Heart right ventricle (tissue), 16 donors: ENCODE measurements at regions of chr12 and their contacts with region 1.

Region 1: DNA sequence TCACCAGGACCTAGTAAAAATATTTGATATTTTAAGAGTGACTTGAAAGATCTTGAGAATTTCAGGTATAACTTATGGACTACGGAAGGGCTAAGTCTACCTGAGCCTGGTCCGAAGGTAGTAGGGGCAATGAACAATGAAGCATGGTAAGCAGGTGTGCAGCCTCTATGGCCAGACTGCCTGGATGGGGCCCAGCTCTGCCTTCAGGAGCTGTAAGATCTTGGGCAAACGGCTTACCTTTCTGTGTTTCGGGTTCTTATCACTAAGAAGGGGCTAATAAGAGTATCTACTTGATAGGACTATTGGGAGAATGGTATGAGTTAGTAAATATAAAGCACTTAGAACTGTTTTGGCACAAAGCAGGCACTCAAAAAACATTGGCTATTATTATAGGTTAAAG is 19.1 kb upstream of the WASHC3 start:
- DNase-seq: no peak
- ATAC-seq: no peak
- H3K4me3 ChIP-seq: no peak overlapping the region
- H3K27ac ChIP-seq: no peak overlapping the region
- H3K4me1 ChIP-seq: no peaks in the 10 kb centered on the region
- H3K27me3 ChIP-seq: no peaks in the 10 kb centered on the region
- CTCF ChIP-seq: no peak

Region 2: DNA sequence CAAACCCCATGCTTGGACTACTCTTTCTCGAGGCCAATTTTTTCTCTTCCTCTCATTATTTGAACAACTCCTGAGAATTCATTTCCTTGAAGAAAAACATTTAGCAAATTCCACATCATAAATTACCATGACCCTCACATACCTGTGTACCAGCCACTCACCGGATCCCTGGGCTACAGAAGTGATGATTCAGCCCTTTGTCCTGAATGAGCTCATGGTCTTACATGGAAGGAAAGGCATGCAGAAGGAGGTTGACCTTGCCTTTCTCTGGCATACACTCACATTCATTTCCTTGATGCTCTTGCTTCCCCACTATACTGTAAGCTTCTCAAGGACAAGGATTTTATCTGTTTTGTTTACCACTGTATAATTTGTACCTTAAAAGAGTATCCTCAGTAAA is 1062.3 kb before region 1 on chr12:
- intact Hi-C with region 1: loop called in 1 of 10 experiments (anchors 10 kb)
- DNase-seq: no peak
- ATAC-seq: no peak
- H3K4me3 ChIP-seq: no peak overlapping the region
- H3K27ac ChIP-seq: no peak overlapping the region
- H3K4me1 ChIP-seq: no peaks in the 10 kb centered on the region
- H3K27me3 ChIP-seq: no peaks in the 10 kb centered on the region
- CTCF ChIP-seq: no peak

Region 3: DNA sequence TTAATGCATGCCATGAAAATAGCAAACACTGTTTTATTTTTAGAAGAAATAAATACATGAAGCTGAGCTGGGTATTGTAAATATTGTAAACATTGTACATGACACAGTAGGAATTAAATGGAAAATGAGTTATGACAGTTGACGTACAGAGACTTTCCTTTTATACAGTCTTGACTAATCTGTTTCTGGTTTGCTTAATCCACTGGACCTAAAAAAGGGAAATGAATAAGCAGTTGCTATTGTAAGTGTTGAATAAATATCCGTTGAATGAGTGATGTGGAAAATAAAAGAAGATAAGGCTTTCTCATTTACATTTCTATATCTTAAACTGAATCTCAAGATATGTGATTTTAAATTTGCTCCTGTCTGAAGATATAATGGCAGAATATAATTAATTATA is 101.8 kb after region 1 on chr12:
- intact Hi-C with region 1: no loop called
- DNase-seq: no peak
- ATAC-seq: no peak
- H3K4me3 ChIP-seq: no peak overlapping the region
- H3K27ac ChIP-seq: no peak overlapping the region
- H3K4me1 ChIP-seq: no peaks in the 10 kb centered on the region
- H3K27me3 ChIP-seq: no peaks in the 10 kb centered on the region
- CTCF ChIP-seq: no peak